Keratinocyte (primary cell): ENCODE measurements at regions of chr2 and their contacts with region 1.

Region 1: DNA sequence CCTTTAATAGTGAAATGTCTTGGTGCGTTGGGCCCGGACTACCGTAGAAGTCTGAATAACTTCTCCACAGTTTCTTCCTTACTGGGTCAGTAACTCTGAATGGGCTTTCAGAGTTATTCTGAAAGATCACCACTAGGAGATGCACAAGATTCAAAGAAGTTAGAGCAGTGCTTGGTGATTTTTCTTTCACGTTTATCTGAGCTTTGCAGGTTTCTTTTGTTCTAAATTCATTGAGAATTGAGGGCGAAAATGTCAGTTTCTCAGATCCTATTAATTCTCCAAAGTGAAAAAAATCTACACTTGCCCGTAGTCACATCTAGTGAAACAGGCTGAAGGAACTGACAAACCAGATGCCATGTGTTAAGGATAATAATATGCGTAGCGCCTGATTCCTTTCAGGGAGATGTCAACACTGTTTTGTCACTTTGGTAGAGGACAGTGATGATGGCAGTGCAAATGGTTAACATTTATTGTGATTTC is 70.1 kb downstream of the QPCT start:
- DNase-seq: no peak
- H3K4me3 ChIP-seq: no peak overlapping the region
- H3K27ac ChIP-seq: no peak overlapping the region
- H3K4me1 ChIP-seq: no peaks in the 10 kb centered on the region
- H3K27me3 ChIP-seq: no peaks in the 10 kb centered on the region
- CTCF ChIP-seq: peak; percentile 15 to 88 (median 77)

Region 2: DNA sequence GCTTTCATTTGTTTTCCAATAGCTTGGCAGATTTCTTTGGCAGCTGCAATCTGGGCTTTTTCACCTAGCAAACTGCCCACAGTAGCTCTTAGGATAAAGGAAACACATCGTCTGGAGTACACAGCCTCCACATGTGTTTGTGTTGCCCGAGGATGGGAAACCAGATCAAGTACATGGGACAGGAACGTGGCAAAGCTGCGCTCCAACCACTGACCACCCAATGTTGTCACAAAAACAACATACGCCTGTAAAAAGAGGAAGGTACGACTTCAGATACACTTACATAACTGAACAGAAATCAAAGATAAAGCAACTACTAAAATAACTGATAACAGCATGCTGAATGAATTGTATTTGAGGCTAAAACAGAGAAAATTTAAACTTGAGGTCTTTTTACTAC is 345.8 kb before region 1 on chr2:
- dilution Hi-C with region 1: no loop called
- DNase-seq: no peak
- H3K4me3 ChIP-seq: no peak overlapping the region
- H3K27ac ChIP-seq: no peak overlapping the region
- H3K4me1 ChIP-seq: no peaks in the 10 kb centered on the region
- H3K27me3 ChIP-seq: no peaks in the 10 kb centered on the region
- CTCF ChIP-seq: no peak

Region 3: DNA sequence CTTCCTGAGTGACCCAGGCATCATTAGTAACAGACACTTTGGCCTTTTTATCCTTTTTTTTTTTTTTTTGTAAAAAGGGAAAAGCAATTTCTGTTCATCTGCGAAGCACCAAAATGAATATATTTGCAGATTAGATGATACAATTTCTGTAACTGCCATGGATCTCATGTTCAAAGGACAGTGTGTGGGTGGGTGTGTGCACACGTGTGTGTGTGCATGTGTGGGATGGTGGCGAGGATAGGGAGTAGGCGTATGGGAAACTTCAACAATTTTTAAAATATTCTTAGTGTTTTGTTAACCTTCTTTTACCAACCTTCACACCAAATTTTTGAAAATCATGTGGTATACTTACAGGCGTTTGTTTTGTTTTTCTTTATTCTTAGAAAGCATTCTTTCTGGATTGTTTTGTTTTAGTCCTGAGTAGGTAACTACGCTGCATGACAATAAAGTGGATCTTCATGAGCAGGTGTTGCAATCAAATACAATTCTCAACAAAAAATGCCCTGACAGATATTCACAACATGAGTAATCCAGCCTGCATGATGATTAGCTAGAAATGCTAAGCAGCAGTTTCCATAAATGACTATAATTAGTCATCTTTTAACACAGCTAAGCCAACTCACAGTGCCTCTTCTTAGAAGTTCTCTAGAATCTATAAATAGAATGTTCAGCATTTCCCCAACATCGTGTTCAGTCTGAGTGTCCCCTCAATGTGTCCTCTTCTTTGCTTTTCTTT is 457.1 kb after region 1 on chr2:
- dilution Hi-C with region 1: loop called (anchors 25 kb)
- DNase-seq: peak; percentile 45
- H3K4me3 ChIP-seq: no peak overlapping the region
- H3K27ac ChIP-seq: peak overlapping the region; percentile 53
- H3K4me1 ChIP-seq: peaks cover 31% of the 10 kb centered on the region
- H3K27me3 ChIP-seq: no peaks in the 10 kb centered on the region
- CTCF ChIP-seq: no peak